ENCODE measurements at regions of chr2 and their contacts with region 1.

Region 1: GRCh38 chr2:191030521-191031154 is 16.7 kb upstream of the STAT1 start:
- DNase-seq: no peak
- ATAC-seq: peak; percentile 88
- H3K4me3 Mint-ChIP-seq: no peak overlapping the region
- H3K27ac Mint-ChIP-seq: no peak overlapping the region
- H3K4me1 Mint-ChIP-seq: peaks cover 6% of the 10 kb centered on the region
- H3K27me3 Mint-ChIP-seq: no peaks in the 10 kb centered on the region
- CTCF ChIP-seq: no peak

Region 2: DNA sequence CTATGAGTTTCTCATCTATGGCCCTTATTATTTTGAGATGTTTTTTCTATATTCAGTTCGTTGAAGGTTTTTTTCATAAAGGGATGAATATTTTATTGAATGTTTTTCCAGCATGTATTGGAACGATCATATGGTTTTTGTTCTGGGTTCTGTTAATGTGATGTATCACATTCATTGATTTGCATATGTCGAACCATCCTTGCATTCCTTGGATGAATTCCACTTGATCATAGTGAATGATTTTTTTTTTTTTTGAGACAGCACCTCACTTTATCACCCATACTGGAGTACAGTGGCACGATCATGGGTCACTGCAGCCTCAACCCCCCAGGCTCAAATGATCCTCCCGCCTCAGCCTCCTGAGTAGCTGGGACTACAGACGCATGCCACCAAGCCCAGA is 490.6 kb before region 1 on chr2:
- CTCF ChIA-PET with region 1: no interaction called
- POLR2A ChIA-PET with region 1: no interaction called
- intact Hi-C with region 1: no loop called
- DNase-seq: no peak
- ATAC-seq: no peak
- H3K4me3 Mint-ChIP-seq: no peak overlapping the region
- H3K27ac Mint-ChIP-seq: no peak overlapping the region
- H3K4me1 Mint-ChIP-seq: peaks cover 11% of the 10 kb centered on the region
- H3K27me3 Mint-ChIP-seq: no peaks in the 10 kb centered on the region
- CTCF ChIP-seq: no peak

Region 3: DNA sequence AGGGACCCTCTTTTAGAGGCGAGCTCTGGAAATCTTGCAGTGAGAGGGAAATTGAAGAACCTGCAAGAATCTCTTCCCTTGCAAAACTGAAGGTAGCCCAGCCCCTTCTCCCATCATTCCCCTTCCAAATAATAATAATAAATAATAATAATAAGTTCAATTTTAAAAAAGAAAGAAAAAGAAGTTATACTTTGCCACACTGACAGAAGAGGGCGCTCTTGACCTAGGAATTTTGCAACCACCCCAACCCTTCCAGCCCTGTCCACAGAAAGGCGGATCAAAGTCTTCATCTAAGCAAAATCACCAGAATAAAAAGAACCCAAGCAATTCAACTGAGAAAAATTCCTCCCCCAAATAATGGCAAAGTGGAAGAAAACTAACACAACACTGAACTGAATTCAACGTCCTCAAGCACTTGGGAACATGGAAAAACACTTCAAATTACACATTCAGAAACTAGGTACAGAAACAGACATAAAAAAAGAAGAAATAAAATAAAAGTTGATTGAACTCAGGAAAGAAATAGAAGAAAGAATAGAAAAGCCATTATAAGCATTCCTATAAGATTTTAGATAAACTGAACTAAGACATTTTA is 248.9 kb before region 1 on chr2:
- CTCF ChIA-PET with region 1: interaction called, 10 read pairs
- POLR2A ChIA-PET with region 1: no interaction called
- intact Hi-C with region 1: loop called (anchors 1 kb)
- DNase-seq: no peak
- ATAC-seq: no peak
- H3K4me3 Mint-ChIP-seq: no peak overlapping the region
- H3K27ac Mint-ChIP-seq: no peak overlapping the region
- H3K4me1 Mint-ChIP-seq: no peaks in the 10 kb centered on the region
- H3K27me3 Mint-ChIP-seq: peaks cover 4% of the 10 kb centered on the region
- CTCF ChIP-seq: no peak

Region 4: DNA sequence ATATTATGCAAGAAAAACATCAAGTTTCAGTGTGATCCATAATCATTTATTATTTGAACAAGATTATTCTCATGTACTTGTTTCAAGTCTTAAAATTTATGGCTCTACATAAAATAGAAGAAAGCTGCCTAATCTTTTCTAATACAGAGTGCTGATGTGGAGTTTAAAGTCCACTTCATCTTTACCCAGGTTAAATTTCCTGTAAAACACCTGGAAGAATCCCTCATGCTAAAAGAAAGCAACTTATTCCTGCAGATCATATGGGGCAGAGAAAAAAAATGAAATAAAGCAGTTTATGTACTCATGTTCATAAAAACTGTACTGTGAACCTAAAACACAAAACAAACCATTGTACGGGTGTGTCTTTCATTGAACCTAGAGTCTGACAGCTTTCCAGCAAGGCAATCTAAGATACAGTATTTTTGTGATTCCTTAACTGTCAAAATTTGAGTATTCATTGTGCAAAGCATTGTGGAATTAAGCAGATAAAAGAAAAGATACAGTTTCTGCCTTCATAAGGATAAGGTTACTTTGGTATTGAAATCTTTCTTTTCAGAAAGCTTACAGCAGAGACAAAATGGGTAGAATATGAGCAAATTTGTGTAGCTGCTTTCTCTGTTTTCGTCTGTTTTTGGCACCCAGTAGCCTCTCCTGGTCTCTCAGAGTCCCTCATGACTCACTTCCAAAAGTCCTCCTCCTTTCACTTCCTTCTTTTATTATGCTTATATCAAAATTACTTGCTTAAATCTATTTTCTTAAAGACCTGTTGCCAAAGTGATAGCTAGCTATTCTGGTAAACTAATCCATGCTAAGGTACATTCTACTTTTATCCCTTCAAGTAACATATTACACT is 176.9 kb before region 1 on chr2:
- CTCF ChIA-PET with region 1: interaction called, 5 read pairs
- POLR2A ChIA-PET with region 1: no interaction called
- intact Hi-C with region 1: loop called (anchors 1 kb)
- DNase-seq: no peak
- ATAC-seq: peak; percentile 60
- H3K4me3 Mint-ChIP-seq: no peak overlapping the region
- H3K27ac Mint-ChIP-seq: peak overlapping the region; percentile 9
- H3K4me1 Mint-ChIP-seq: peaks cover 19% of the 10 kb centered on the region
- H3K27me3 Mint-ChIP-seq: no peaks in the 10 kb centered on the region
- CTCF ChIP-seq: no peak

Region 5: GRCh38 chr2:190996338-190996946 is 34.2 kb before region 1 on chr2:
- CTCF ChIA-PET with region 1: interaction called, 7 read pairs
- POLR2A ChIA-PET with region 1: no interaction called
- intact Hi-C with region 1: loop called (anchors 1 kb)
- DNase-seq: no peak
- ATAC-seq: peak; percentile 82
- H3K4me3 Mint-ChIP-seq: no peak overlapping the region
- H3K27ac Mint-ChIP-seq: no peak overlapping the region
- H3K4me1 Mint-ChIP-seq: peaks cover 6% of the 10 kb centered on the region
- H3K27me3 Mint-ChIP-seq: no peaks in the 10 kb centered on the region
- CTCF ChIP-seq: peak; percentile 19

Region 6: GRCh38 chr2:191020221-191020741 is 10.4 kb before region 1 on chr2:
- CTCF ChIA-PET with region 1: no interaction called
- POLR2A ChIA-PET with region 1: no interaction called
- intact Hi-C with region 1: loop called (anchors 1 kb)
- DNase-seq: peak; percentile 97
- ATAC-seq: peak; percentile 83
- H3K4me3 Mint-ChIP-seq: no peak overlapping the region
- H3K27ac Mint-ChIP-seq: no peak overlapping the region
- H3K4me1 Mint-ChIP-seq: peaks cover 10% of the 10 kb centered on the region
- H3K27me3 Mint-ChIP-seq: no peaks in the 10 kb centered on the region
- CTCF ChIP-seq: no peak

Measured in activated B cell treated with CpG ODN at 0.5 μM for 24 hours (primary cell).